Kidney (tissue), 22 donors: ENCODE measurements at regions of chrX and their contacts with region 1.

Region 1: GRCh38 chrX:110146521-110146920 is 143.6 kb downstream of the TMEM164 start:
- DNase-seq: peak in 3 of 5 donors; percentile 24 to 84 (median 76)
- H3K4me3 ChIP-seq: no peak overlapping the region
- H3K27ac ChIP-seq: no peak overlapping the region
- H3K4me1 ChIP-seq: no peaks in the 10 kb centered on the region
- H3K27me3 ChIP-seq: no peaks in the 10 kb centered on the region
- CTCF ChIP-seq: peak; percentile 49

Region 2: DNA sequence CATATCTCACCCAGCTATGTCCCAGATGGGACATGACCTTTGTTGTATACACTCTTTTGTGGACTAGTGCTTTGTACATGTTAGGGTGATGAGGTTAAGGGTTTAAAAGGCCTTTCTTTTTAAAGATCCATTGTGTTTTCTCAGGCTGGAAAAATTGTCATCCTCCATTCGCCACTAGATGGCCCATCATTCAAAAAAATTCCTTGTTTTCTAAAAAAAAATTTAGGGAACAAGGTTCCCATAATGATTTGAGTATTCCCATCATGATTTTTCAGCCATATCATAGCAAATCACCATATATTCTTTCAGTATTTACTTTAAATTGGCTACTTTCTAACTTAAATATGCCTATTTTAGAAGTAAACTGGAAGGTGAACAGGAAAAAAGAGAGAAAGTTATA is 235.5 kb before region 1 on chrX:
- intact Hi-C with region 1: loop called (anchors 10 kb)
- DNase-seq: no peak
- H3K4me3 ChIP-seq: no peak overlapping the region
- H3K27ac ChIP-seq: no peak overlapping the region
- H3K4me1 ChIP-seq: no peaks in the 10 kb centered on the region
- H3K27me3 ChIP-seq: no peaks in the 10 kb centered on the region
- CTCF ChIP-seq: peak; percentile 27